ENCODE measurements at regions of chr19 and their contacts with region 1.

Region 1: DNA sequence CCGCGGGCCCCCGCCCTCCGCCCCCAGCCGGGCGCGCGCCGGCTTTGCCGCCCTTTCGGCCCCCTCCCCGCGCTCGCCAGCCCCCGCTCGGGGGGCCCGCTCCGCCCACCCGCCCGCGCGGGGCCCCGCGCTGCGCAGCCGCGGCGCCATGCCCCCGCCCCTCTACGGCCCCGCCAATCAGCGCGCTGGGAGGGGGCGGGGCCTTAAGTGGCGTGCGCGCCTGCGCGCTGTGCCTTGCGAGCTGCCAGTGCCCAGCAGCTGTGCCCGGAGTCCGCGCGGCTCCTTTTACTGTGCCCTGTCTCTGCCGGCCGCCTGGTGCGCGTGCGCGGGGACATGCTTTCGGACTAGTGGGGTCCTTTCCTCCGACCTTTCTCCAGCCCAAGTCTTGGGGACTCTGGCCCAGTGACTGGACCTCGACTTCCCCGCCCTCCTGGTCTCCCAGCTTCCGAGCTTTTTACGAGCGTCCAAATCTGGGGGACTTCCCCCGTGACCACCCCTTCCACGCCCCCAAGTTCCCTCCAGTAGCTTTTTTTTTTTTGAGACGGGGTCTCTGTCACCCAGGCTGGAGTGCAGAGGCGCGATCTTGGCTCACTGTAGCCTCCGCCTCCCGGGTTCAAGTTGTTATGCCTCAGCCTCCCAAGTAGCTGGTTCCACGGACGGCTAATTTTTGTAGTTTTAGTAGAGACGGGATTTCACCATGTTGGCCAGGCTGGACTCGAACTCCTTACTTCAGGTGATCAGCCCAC is at the start of gene MBD3:
- DNase-seq: peak; percentile 90 to 94
- H3K4me3 ChIP-seq: peak within 1 kb of the TSS; percentile 98
- H3K4me3 Mint-ChIP-seq: peak within 1 kb of the TSS; percentile 93
- H3K27ac Mint-ChIP-seq: peak within 1 kb of the TSS; percentile 93
- H3K4me1 ChIP-seq: peaks cover 9% of the 10 kb centered on the region
- H3K4me1 Mint-ChIP-seq: peaks cover 6% of the 10 kb centered on the region
- H3K27me3 ChIP-seq: no peaks in the 10 kb centered on the region
- H3K27me3 Mint-ChIP-seq: no peaks in the 10 kb centered on the region
- CTCF ChIP-seq: no peak
- total RNA-seq, gene MBD3: 89.3 and 95.3 TPM in 2 replicates

Region 2: DNA sequence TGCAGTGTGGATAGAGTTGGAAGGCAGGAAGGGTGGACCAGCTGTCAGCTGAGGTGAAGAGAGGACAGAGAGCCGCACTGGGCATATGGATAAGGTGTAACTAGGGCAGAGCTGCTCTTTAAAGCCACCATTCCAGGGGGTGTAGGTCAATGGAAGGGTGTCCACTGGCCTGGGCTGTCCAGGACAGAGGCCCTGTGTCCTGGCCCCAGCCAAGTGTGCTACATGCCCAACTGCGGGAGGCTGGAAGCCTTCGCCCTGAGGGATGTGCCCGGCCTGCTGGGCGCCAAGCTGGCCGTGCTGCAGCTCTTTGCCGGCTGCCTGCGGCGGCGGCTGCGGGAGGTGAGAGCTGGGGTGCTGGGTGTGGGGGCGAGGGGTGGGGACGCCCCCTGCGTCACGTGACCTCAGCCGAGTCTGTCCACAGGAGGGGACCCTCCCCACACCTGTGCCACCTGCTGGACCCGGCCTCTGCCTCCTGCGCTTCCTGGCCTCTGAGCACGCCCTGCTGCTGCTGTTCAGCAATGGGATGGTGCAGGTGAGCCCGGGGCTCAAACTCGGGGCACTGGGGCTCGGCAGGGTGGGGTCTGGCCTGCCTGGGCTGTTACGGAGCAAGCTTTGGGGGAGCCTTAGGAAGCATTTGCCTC is 59.3 kb before region 1 on chr19:
- CTCF ChIA-PET with region 1: no interaction called
- POLR2A ChIA-PET with region 1: no interaction called
- intact Hi-C with region 1: no loop called
- DNase-seq: no peak
- H3K4me3 ChIP-seq: no peak overlapping the region
- H3K4me3 Mint-ChIP-seq: no peak overlapping the region
- H3K27ac Mint-ChIP-seq: no peak overlapping the region
- H3K4me1 ChIP-seq: no peaks in the 10 kb centered on the region
- H3K4me1 Mint-ChIP-seq: no peaks in the 10 kb centered on the region
- H3K27me3 ChIP-seq: no peaks in the 10 kb centered on the region
- H3K27me3 Mint-ChIP-seq: no peaks in the 10 kb centered on the region
- CTCF ChIP-seq: no peak

Region 3: DNA sequence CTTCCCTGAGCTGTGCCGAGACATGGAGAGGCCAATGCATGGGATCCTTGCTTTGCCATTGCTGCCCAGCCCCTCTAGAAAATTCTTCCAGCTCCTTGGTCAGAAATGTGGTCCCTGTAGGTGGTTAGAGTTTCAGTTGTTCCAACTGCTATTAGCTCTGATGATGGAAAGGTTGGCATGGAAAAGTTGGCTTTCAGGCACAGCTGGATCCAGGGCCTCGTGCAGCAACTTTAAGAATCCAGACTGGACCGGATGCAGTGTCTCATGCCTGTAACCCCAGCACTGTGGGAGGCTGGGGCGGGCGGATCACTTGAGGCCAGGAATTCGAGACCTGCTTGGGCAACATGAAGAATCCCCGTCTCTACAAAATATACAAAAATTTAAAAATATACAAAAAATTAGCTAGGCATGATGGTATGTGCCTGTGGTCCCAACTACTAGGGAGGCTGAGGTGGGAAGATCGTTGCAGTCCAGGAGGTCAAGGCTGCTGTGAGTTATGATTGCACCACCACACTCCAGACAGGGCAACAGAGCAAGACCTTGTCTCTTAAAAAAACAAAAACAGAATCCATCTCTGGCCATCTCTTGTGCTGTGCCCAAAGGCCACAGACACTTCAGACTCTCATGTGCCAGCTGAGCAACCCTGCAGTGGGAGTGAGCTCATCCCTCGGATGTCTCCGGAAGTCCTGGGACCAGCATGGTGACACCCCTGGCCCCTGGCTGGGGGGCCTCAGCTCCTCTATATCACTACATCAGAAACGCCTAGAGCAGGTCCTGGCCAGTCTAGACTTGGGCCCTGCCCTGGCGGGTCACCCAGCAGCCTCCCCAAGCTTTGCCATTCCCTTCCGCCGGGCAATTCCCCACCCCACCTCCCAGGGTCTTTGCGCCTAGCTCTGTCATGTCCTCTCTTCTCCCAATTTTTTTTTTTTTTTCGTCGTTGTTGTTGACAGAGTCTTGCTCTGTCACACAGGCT is 41.6 kb before region 1 on chr19:
- CTCF ChIA-PET with region 1: interaction called, 14 read pairs
- POLR2A ChIA-PET with region 1: interaction called, 4 read pairs
- intact Hi-C with region 1: loop called (anchors 2 kb)
- DNase-seq: no peak
- H3K4me3 ChIP-seq: no peak overlapping the region
- H3K4me3 Mint-ChIP-seq: no peak overlapping the region
- H3K27ac Mint-ChIP-seq: no peak overlapping the region
- H3K4me1 ChIP-seq: no peaks in the 10 kb centered on the region
- H3K4me1 Mint-ChIP-seq: no peaks in the 10 kb centered on the region
- H3K27me3 ChIP-seq: no peaks in the 10 kb centered on the region
- H3K27me3 Mint-ChIP-seq: no peaks in the 10 kb centered on the region
- CTCF ChIP-seq: no peak

Region 4: DNA sequence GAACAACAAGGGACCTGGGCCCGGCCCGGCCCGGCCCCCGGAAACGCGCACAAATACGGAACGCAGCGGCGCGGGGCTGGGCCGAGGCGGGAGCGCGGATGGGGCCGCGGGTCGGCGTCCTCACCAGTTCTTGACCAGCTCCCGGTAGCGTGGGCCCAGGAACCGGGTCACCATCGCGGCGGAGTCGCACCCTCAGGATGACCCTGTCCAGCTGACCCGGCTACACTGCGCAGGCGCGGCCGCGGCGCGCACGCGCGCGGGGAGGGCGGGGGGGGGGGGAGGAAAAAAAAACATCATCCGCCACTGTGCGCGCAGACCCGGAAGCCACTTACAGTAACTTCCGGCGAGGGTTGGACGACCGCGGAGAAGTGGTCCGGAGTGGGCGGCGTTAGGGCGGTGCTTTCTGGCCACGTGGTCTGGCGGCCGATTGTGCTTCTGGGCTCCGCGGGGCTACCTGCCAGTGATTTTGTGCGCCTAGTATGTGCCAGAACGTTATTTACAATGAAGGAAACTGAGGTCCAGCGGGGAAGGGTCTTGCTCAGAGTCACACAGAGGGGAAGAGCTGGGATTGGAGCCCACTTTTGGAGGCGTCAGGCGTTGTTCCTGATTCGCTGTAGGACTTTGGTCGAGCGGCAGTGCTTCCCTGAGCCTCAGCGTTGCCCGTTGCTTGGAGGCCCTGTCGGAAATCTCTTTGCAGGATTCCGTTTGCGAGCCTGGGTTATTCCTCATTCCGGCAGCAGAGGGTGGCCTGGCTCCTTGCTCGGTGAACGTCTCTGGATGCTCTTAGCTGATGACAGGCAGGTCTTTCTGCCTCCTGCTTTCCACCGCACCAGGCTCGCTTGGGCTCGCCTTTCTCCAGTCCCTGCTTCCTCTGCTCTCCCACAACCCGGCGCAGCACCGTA is 12.6 kb after region 1 on chr19 and contains the start of gene UQCR11:
- CTCF ChIA-PET with region 1: no interaction called
- POLR2A ChIA-PET with region 1: interaction called, 16 read pairs
- intact Hi-C with region 1: loop called (anchors 1 kb)
- DNase-seq: peak; percentile 93 to 95
- H3K4me3 ChIP-seq: peak within 1 kb of the TSS; percentile 80
- H3K4me3 Mint-ChIP-seq: peak within 1 kb of the TSS; percentile 96
- H3K27ac Mint-ChIP-seq: peak within 1 kb of the TSS; percentile 97
- H3K4me1 ChIP-seq: peaks cover 17% of the 10 kb centered on the region; the same call in 1 of the 2 replicates
- H3K4me1 Mint-ChIP-seq: no peaks in the 10 kb centered on the region
- H3K27me3 ChIP-seq: no peaks in the 10 kb centered on the region
- H3K27me3 Mint-ChIP-seq: no peaks in the 10 kb centered on the region
- CTCF ChIP-seq: peak; percentile 47 to 60
- total RNA-seq, gene UQCR11: 222 and 238 TPM in 2 replicates

Measured in Caco-2 (cell line).